GM12878 (cell line): ENCODE measurements at regions of chr11 and their contacts with region 1.

Region 1: GRCh38 chr11:83071567-83072349 is at the start of gene RAB30:
- DNase-seq: peak; percentile 99
- ATAC-seq: peak; percentile 88
- H3K4me3 ChIP-seq: peak within 1 kb of the TSS; percentile 97
- H3K27ac ChIP-seq: peak within 1 kb of the TSS; percentile 92
- H3K4me1 ChIP-seq: peaks cover 16% of the 10 kb centered on the region
- H3K27me3 ChIP-seq: no peaks in the 10 kb centered on the region
- CTCF ChIP-seq: no peak
- EP300 ChIP-seq: no peak
- POLR2A ChIP-seq: peak; percentile 93
- RAD21 ChIP-seq: peak; percentile 33; the same call in 1 of the 2 replicates
- polyA plus RNA-seq, gene RAB30: 9.8 to 14.2 TPM

Region 2: DNA sequence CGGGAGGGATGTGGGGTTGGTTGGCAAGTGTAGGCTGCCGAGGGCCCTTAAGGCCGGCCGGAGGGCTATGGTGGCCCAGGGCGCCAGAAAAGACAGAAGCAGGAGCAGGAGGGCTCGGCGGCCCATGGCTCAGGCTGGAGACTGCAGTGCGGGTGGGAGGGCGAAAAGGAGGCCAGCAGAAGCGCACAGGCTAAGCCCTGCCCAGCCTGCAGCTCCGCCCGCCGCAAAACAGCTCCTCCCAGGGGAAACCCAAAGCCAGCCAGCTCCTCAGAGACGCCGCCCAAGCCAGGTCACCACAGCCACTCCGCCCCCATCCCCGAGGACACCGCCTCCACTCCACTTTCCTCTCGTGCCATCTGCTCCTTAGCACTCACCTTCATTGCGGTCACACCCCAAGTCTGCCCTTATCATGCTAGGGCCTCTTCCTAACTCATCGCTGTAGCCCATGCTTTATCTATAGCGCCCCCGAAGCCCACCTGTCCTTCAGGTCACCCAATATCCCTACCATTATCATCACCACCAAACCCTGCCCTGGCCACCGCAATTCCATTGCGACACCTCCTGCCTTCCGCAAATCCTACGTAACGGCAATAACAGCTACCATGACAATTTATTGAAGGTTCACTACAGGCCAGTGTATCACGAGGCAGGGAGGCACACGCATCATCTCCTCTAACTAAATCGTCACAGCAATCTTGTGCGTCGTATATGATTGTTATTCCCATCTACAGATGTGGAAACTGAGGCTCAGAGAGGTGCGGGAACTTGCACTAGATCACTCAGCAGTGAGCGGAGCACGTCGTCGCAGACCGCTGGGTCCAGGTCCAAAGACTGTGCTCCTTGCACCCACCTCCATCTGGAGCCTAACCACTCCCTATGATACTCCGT is 171.2 kb before region 1 on chr11 and contains the start of gene PRCP:
- CTCF ChIA-PET with region 1: interaction called, 3 read pairs
- POLR2A ChIA-PET with region 1: interaction called, 11 read pairs
- RAD21 ChIA-PET with region 1: interaction called, 5 read pairs
- SMC1A ChIA-PET with region 1: interaction called, 5 read pairs
- in situ Hi-C with region 1: loop called (anchors 10 kb)
- intact Hi-C with region 1: loop called (anchors 2 kb)
- DNase-seq: peak; percentile 84
- ATAC-seq: peak; percentile 88
- H3K4me3 ChIP-seq: peak within 1 kb of the TSS; percentile 82
- H3K27ac ChIP-seq: peak within 1 kb of the TSS; percentile 84
- H3K4me1 ChIP-seq: peaks cover 15% of the 10 kb centered on the region
- H3K27me3 ChIP-seq: no peaks in the 10 kb centered on the region
- CTCF ChIP-seq: no peak
- EP300 ChIP-seq: 0 out of 4 replicates have a peak, but pooled peaks of 1 of the 2 experiments have one; percentile 12
- POLR2A ChIP-seq: peak; percentile 84
- RAD21 ChIP-seq: no peak
- polyA plus RNA-seq, gene PRCP: 21.5 to 25.3 TPM

Region 3: GRCh38 chr11:82969811-82970210 is 101.9 kb before region 1 on chr11:
- CTCF ChIA-PET with region 1: interaction called, 4 read pairs
- POLR2A ChIA-PET with region 1: interaction called, 8 read pairs
- RAD21 ChIA-PET with region 1: interaction called, 12 read pairs
- SMC1A ChIA-PET with region 1: interaction called, 8 read pairs
- in situ Hi-C with region 1: no loop called
- intact Hi-C with region 1: no loop called
- DNase-seq: peak; percentile 84
- ATAC-seq: peak; percentile 83
- H3K4me3 ChIP-seq: no peak overlapping the region
- H3K27ac ChIP-seq: peak overlapping the region; percentile 94
- H3K4me1 ChIP-seq: peaks cover 41% of the 10 kb centered on the region
- H3K27me3 ChIP-seq: no peaks in the 10 kb centered on the region
- CTCF ChIP-seq: no peak
- EP300 ChIP-seq: peak; percentile 99 to 100
- POLR2A ChIP-seq: no peak
- RAD21 ChIP-seq: no peak

Region 4: GRCh38 chr11:83033972-83034672 is 37.6 kb before region 1 on chr11:
- CTCF ChIA-PET with region 1: interaction called, 3 read pairs
- POLR2A ChIA-PET with region 1: no interaction called
- RAD21 ChIA-PET with region 1: interaction called, 13 read pairs
- SMC1A ChIA-PET with region 1: interaction called, 13 read pairs
- in situ Hi-C with region 1: no loop called
- intact Hi-C with region 1: no loop called
- DNase-seq: no peak
- ATAC-seq: peak; percentile 50
- H3K4me3 ChIP-seq: 0 out of 2 replicates have a peak overlapping the region, but pooled peaks have one; percentile 10
- H3K27ac ChIP-seq: no peak overlapping the region
- H3K4me1 ChIP-seq: peaks cover 21% of the 10 kb centered on the region
- H3K27me3 ChIP-seq: no peaks in the 10 kb centered on the region
- CTCF ChIP-seq: no peak
- EP300 ChIP-seq: no peak
- POLR2A ChIP-seq: no peak
- RAD21 ChIP-seq: no peak

Region 5: GRCh38 chr11:83087035-83087434 is 15.3 kb after region 1 on chr11:
- CTCF ChIA-PET with region 1: interaction called, 9 read pairs
- POLR2A ChIA-PET with region 1: no interaction called
- RAD21 ChIA-PET with region 1: interaction called, 3 read pairs
- SMC1A ChIA-PET with region 1: interaction called, 24 read pairs
- in situ Hi-C with region 1: no loop called
- intact Hi-C with region 1: no loop called
- DNase-seq: no peak
- ATAC-seq: peak; percentile 68
- H3K4me3 ChIP-seq: no peak overlapping the region
- H3K27ac ChIP-seq: no peak overlapping the region
- H3K4me1 ChIP-seq: no peaks in the 10 kb centered on the region
- H3K27me3 ChIP-seq: no peaks in the 10 kb centered on the region
- CTCF ChIP-seq: peak in 2 of 3 experiments; percentile 18 to 44; a peak in 1 of 6 replicates
- EP300 ChIP-seq: no peak
- POLR2A ChIP-seq: no peak
- RAD21 ChIP-seq: peak; percentile 50

Region 6: DNA sequence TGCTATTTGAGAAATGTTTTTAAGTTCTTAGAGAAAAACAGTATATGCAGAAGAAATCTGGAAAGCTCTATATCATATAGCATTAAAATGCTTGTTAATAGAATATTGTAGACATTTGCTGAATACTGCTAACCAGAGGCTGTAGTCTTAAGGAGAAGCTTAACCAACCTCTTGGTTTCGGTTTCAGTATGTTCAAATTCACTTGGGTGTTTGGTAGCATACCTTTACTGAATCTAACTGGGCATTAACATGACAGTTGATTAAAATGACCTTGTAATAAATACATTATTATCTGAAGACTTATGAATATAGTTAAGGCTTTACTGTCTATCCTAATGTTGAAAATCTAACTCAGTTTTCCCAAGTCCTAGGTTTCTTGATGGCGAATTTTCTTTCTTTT is 90.6 kb after region 1 on chr11:
- CTCF ChIA-PET with region 1: interaction called, 3 read pairs
- POLR2A ChIA-PET with region 1: interaction called, 42 read pairs
- RAD21 ChIA-PET with region 1: interaction called, 27 read pairs
- SMC1A ChIA-PET with region 1: interaction called, 48 read pairs
- in situ Hi-C with region 1: loop called (anchors 5 kb)
- intact Hi-C with region 1: loop called (anchors 2 kb)
- DNase-seq: no peak
- ATAC-seq: peak; percentile 67
- H3K4me3 ChIP-seq: peak overlapping the region; percentile 98
- H3K27ac ChIP-seq: no peak overlapping the region
- H3K4me1 ChIP-seq: no peaks in the 10 kb centered on the region; the same call in none of the 2 replicates
- H3K27me3 ChIP-seq: no peaks in the 10 kb centered on the region
- CTCF ChIP-seq: no peak
- EP300 ChIP-seq: no peak
- POLR2A ChIP-seq: no peak
- RAD21 ChIP-seq: no peak

Region 7: DNA sequence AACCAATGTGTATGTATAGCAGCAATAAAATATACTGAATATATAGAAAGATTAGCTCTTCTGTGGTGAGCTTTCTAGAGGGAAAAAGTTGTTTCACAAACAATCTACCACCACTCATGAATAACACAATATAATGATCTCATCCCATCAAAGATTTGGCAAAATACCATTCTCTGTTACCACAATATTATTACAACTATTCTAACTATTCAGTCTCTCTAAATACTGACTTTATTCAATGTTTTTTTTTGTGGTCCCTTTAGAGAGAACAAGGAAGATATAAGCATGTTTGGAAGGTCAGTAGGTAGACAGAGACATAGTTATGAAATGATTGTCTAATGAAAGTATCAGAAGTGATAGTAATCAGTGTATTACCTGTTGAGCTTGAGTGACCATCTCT is 206.6 kb after region 1 on chr11:
- CTCF ChIA-PET with region 1: no interaction called
- POLR2A ChIA-PET with region 1: no interaction called
- RAD21 ChIA-PET with region 1: no interaction called
- SMC1A ChIA-PET with region 1: no interaction called
- in situ Hi-C with region 1: no loop called
- intact Hi-C with region 1: no loop called
- DNase-seq: no peak
- ATAC-seq: no peak
- H3K4me3 ChIP-seq: no peak overlapping the region
- H3K27ac ChIP-seq: no peak overlapping the region
- H3K4me1 ChIP-seq: no peaks in the 10 kb centered on the region
- H3K27me3 ChIP-seq: no peaks in the 10 kb centered on the region
- CTCF ChIP-seq: no peak
- EP300 ChIP-seq: no peak
- POLR2A ChIP-seq: no peak
- RAD21 ChIP-seq: no peak